Activated naive CD4-positive, alpha-beta T cell treated with anti-CD3 and anti-CD28 coated beads for 36 hours (primary cell): ENCODE measurements at regions of chr5 and their contacts with region 1.

Region 1: GRCh38 chr5:173972925-173973615 is 15.9 kb upstream of the C5orf47 start:
- DNase-seq: peak; percentile 90
- H3K4me3 Mint-ChIP-seq: peak overlapping the region; percentile 71
- H3K27ac Mint-ChIP-seq: peak overlapping the region; percentile 47
- H3K4me1 Mint-ChIP-seq: peaks cover 8% of the 10 kb centered on the region
- H3K27me3 Mint-ChIP-seq: peaks cover 8% of the 10 kb centered on the region

Region 2: GRCh38 chr5:173293817-173294672 is 679.0 kb before region 1 on chr5:
- CTCF ChIA-PET with region 1: no interaction called
- intact Hi-C with region 1: loop called (anchors 1 kb)
- DNase-seq: peak; percentile 84
- H3K4me3 Mint-ChIP-seq: no peak overlapping the region
- H3K27ac Mint-ChIP-seq: no peak overlapping the region
- H3K4me1 Mint-ChIP-seq: peaks cover 11% of the 10 kb centered on the region
- H3K27me3 Mint-ChIP-seq: peaks cover 40% of the 10 kb centered on the region

Region 3: DNA sequence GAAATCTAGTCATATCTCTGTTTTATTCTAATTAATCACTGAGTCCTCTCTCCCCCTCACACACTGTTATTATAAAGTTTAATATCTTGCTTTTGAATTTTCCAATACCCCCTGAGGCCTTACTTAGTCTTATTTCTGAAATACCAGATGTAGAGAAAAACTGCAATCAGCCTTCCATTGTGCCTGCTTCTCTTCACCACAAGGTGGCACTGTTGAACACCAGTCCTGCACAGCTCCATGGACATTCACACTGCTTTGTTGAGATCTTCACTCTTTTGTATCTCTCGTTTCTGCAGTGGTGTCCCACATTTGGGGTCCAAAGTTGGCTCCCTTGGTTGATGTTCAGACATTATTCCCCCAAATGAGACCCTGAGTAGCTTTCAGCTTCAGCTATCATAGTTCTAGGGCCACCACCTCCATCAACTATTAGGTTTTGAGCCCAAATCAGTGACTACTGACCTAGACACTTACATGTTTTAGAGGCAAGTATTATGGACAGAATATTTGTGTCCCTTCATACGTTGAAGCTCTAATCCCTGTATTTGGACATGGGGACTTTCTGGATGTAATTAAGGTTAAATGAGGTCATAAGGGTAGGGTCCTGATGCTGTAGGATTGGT is 380.9 kb before region 1 on chr5:
- CTCF ChIA-PET with region 1: interaction called, 3 read pairs
- intact Hi-C with region 1: loop called (anchors 1 kb)
- DNase-seq: peak; percentile 40
- H3K4me3 Mint-ChIP-seq: no peak overlapping the region
- H3K27ac Mint-ChIP-seq: no peak overlapping the region
- H3K4me1 Mint-ChIP-seq: no peaks in the 10 kb centered on the region
- H3K27me3 Mint-ChIP-seq: no peaks in the 10 kb centered on the region

Region 4: DNA sequence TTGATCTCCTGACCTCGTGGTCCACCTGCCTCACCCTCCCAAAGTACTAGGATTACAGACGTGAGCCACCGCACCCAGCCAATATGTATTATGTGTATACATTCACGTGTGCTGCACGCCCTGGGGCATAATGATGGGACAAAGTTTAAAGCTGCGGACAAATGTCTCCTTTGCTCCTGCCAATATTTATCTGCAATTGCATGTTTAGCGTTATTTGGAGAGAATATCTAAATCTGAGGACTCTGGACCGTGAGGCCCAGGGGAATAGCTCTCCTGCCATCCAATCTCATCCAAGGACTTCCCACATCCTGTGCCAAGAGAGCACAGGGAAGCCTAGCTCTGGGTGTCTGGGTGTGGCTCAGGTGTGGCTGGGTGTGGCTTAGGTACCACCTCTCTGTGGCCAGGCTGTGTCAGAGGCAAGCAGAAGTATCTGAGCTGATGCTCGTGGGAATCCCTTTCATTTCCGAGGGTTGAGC is 349.7 kb before region 1 on chr5:
- CTCF ChIA-PET with region 1: interaction called, 57 read pairs
- intact Hi-C with region 1: loop called (anchors 1 kb)
- DNase-seq: no peak
- H3K4me3 Mint-ChIP-seq: no peak overlapping the region
- H3K27ac Mint-ChIP-seq: no peak overlapping the region
- H3K4me1 Mint-ChIP-seq: peaks cover 5% of the 10 kb centered on the region
- H3K27me3 Mint-ChIP-seq: no peaks in the 10 kb centered on the region

Region 5: DNA sequence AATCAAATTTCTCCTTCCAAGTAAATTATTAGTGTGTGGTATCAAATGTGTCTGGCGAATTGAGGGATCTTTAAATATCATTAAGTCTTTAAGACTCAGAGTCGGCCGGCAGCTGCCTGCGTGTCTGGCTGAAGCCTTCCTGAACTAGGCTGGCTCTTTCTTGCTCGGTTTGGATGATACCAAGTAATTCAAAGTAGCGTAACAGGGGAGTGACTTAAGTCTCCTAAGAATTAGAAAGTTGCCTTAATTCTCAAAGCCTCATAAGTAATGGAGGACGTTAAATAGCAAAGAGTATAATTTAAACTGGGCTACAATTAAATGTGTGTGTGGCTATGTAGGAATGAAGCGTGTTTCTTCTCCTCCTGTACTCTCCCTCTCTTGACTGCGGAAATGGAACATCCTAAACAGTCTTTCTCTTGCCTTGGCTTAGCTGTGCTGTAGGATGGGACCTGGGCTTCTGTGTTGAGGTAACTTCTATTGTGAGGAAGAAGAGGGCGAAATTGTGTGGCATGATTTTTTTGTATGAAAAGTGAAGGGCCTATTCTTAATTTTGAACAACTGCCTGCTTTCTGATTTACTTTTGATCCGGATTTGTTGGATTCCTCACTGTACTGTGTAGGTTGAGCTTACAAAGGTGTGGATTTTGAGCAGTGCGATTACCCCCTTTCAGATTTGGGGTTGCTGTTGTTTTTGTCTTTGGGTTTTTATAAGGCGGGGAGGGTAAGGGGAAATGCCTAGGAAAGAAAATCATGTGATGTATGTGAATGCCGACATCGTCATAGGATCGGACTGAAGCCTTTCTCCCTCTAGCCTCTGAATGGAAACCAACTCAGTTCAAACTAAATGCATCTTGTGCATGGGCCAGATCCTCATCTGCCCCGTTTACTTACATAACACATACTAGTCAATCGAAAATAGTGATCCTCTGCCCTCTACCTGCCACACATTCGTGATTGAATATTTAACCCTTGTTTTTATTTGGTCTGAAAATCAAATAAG is 55.0 kb before region 1 on chr5:
- CTCF ChIA-PET with region 1: no interaction called
- intact Hi-C with region 1: loop called (anchors 1 kb)
- DNase-seq: peak; percentile 72
- H3K4me3 Mint-ChIP-seq: no peak overlapping the region
- H3K27ac Mint-ChIP-seq: no peak overlapping the region
- H3K4me1 Mint-ChIP-seq: peaks cover 18% of the 10 kb centered on the region
- H3K27me3 Mint-ChIP-seq: no peaks in the 10 kb centered on the region

Region 6: GRCh38 chr5:174056064-174056847 is 83.2 kb after region 1 on chr5:
- CTCF ChIA-PET with region 1: no interaction called
- intact Hi-C with region 1: no loop called
- DNase-seq: no peak
- H3K4me3 Mint-ChIP-seq: no peak overlapping the region
- H3K27ac Mint-ChIP-seq: no peak overlapping the region
- H3K4me1 Mint-ChIP-seq: no peaks in the 10 kb centered on the region
- H3K27me3 Mint-ChIP-seq: peaks cover 5% of the 10 kb centered on the region

Region 7: GRCh38 chr5:174311531-174312269 is 338.6 kb after region 1 on chr5:
- CTCF ChIA-PET with region 1: no interaction called
- intact Hi-C with region 1: loop called (anchors 1 kb)
- DNase-seq: peak; percentile 71
- H3K4me3 Mint-ChIP-seq: no peak overlapping the region
- H3K27ac Mint-ChIP-seq: no peak overlapping the region
- H3K4me1 Mint-ChIP-seq: peaks cover 6% of the 10 kb centered on the region
- H3K27me3 Mint-ChIP-seq: peaks cover 39% of the 10 kb centered on the region

Region 8: GRCh38 chr5:174418928-174419796 is 446.1 kb after region 1 on chr5:
- CTCF ChIA-PET with region 1: no interaction called
- intact Hi-C with region 1: no loop called
- DNase-seq: peak; percentile 91
- H3K4me3 Mint-ChIP-seq: peak overlapping the region; percentile 34
- H3K27ac Mint-ChIP-seq: no peak overlapping the region
- H3K4me1 Mint-ChIP-seq: peaks cover 11% of the 10 kb centered on the region
- H3K27me3 Mint-ChIP-seq: peaks cover 26% of the 10 kb centered on the region